Activated CD4-positive, alpha-beta T cell treated with anti-CD3 and anti-CD28 coated beads for 36 hours (primary cell): ENCODE measurements at regions of chr18 and their contacts with region 1.

Region 1: DNA sequence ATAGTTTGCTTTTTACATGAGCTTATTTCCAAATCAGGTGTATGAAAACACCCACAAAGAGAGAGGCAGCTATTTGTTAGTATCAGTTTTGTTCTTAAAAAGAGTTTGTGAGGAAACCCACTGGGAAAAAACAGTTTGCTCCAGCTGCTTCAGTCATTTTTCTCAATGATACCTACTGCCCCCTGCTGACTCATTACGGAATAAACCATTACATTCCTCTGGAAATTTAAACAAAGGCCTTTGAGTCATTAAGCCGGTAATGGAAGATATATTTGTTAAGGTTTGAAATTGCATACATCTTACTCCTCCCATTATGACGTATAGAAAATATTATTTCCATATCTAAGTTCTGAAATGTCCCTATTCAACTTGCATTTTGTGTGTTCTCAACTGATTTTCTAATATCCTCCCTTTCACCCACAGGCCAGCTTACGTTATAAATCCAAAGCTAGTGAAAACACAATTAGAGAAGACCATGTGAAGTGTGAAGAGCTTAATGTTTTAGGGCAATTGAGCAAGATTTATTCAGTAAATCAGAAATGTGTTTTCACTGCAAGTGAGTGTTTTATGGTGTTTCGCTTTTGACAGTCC is 761.6 kb downstream of the DSC3 start:
- DNase-seq: no peak
- ATAC-seq: no peak
- H3K4me3 Mint-ChIP-seq: no peak overlapping the region
- H3K27ac Mint-ChIP-seq: no peak overlapping the region
- H3K4me1 Mint-ChIP-seq: no peaks in the 10 kb centered on the region
- H3K27me3 Mint-ChIP-seq: no peaks in the 10 kb centered on the region

Region 2: DNA sequence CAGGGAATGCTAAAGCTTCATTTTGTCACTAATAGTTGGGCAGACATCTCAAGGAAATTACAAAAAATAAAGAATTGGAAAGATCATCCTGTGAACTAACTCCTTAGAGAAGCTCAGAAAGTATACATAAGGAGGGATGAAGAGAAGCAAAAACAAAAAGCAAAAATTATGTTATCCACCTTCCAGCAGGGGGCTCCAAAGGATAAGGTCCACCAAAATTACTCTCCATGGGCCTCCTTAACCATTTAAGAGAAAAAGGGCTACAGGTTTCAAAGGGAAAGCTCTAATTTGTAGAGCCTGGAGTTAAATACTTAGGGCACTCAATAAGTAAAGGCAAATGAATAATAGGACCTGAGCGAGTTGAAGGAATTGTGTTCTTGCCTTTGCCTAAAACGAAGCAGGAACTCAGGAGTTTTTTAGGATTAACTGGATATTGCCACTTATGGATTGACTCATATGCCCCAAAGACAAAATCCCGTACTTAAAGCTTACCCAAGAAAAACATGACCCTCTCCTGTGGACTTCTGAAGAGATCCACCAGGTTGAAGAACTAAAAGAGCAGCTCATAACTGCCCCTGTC is 406.4 kb before region 1 on chr18:
- CTCF ChIA-PET with region 1: interaction called, 6 read pairs
- POLR2A ChIA-PET with region 1: no interaction called
- intact Hi-C with region 1: loop called (anchors 2 to 10 kb)
- DNase-seq: no peak
- ATAC-seq: no peak
- H3K4me3 Mint-ChIP-seq: no peak overlapping the region
- H3K27ac Mint-ChIP-seq: no peak overlapping the region
- H3K4me1 Mint-ChIP-seq: no peaks in the 10 kb centered on the region
- H3K27me3 Mint-ChIP-seq: no peaks in the 10 kb centered on the region